Cardiac septum (tissue), 1 donor: ENCODE measurements at regions of chr6 and their contacts with region 1.

Region 1: DNA sequence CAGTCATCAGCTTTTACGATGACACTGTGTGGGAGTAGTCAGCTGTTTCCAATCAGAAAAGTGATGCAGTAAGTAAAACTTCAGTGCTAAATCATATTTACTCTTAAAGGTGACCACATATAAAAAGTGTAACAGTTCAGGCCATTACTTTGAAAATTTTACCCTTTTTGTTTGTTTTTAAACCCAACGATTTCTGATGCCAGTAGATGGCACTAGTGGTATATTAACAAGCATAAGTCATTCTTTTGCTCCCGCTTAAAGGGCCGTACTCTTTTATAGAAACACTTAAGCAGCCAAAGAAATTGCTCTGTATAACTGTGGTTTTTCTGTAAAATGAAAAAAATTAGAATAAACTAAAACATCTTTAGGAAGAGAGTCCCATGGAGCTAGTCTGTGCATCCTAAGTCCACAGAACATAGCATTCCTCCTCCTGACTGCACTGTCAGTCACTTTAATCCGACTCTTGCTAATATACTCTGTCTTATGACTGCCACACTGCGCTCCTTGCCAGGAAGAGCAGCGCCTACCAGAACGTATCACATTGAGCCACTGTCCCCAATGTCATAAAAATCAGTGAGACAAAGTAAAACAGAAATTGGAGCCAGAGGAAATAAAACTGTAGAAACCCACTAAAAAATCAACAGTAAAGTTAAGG is 25.0 kb downstream of the HEBP2 start:
- DNase-seq: no peak

Region 2: GRCh38 chr6:138509371-138509770 is 80.3 kb after region 1 on chr6:
- intact Hi-C with region 1: loop called (anchors 2 kb)
- DNase-seq: no peak

Region 3: DNA sequence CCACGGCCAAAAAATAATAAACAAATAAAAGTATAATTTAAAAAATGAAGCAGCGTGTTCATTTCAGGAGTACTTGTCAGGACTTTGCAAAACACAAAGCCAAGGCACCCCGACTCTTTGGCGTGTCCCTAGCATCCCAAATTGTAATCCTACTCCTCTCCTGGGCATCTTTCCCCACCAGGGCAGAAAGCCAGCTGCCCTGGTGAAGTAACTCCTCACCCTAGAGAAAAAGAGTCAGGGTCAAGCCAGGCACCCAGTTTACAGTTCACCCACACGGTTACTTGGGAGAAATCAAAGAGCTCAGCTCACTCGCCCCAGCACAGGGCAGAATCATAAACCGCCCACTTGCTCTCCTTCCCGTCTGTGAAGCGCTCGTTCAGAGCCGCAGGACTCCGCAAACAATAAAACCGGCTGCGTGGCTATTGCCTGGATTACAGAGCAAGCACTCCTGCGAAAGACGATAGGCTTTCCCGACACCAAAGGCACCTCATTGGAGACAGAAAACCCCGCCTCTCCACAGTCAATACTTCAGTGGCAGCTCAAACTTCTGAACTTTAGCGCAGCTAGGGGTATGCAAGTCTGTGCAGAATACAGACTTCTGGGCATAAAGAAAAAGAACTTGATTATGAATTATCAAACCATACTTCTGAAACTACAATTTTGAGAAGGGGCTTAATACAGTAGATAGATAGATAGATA is 143.2 kb after region 1 on chr6:
- intact Hi-C with region 1: loop called (anchors 5 kb)
- DNase-seq: peak; percentile 83

Region 4: DNA sequence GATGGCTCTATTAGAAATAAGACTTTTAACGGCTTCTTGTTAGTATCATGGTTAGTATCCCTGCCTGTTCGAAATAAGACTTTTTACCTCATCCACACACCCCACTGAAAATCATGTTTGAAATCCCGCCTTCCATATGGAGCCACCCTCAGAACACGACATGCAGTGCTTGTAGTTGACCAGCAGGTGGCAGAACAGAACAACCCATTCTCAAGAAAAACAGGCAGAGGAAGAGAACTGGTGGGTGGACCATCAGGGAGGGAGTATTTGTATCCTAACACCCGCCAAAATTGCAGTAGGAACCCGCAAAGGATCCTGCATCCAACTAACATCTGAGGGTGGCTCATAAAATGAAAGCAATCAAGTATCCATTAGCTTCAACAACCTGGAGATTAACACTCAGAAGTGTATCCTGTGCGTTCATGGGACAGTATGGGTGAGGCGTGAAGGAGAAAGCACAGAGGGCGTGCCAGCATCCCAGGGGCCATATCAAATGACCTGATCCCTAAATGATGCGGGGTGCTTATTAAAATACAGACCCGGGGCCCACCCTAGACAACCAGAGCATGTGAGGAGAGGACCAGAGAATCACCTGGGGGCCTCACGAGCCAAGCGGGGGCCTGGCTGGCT is 159.8 kb after region 1 on chr6:
- intact Hi-C with region 1: loop called (anchors 2 kb)
- DNase-seq: no peak

Region 5: GRCh38 chr6:138765896-138766655 is 337.0 kb after region 1 on chr6:
- intact Hi-C with region 1: loop called (anchors 5 kb)
- DNase-seq: no peak